RWPE1 (cell line): ENCODE measurements at regions of chr9 and their contacts with region 1.

Region 1: GRCh38 chr9:136118320-136119060 is at the start of gene TMEM250:
- DNase-seq: peak; percentile 99
- H3K27ac ChIP-seq: peak within 1 kb of the TSS; percentile 97
- CTCF ChIP-seq: peak; percentile 29

Region 2: DNA sequence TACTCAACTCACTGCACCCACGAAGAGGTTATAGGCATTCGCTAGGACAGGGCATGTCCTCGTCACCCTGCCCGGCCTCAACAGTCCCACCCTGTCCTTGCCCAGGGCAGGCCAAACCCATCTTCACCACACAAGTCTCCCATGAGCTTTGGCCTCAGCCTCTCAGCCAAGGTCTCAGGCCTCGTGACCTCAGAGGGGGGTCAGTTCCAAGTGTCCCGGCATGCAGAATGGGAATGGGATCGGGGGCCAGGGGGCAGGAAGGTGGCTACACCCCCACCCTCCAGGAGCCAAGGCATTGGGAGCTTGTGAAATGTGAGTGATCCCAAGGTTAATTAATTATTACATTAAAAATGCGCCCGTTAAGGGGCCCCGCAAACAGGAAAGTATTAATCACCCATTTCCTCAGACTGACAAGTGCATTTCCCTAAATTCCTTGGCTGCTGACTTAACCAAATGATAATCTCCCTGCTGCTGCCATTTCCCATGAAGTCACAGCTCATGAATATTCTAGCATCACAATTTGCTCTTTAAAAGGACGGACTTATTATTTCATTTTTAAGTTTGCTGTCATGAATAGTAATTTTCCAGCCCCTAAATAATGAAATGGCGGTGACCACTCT is 149.3 kb before region 1 on chr9:
- CTCF ChIA-PET with region 1: interaction called, 46 read pairs
- POLR2A ChIA-PET with region 1: no interaction called
- DNase-seq: no peak
- H3K27ac ChIP-seq: no peak overlapping the region
- CTCF ChIP-seq: no peak

Region 3: DNA sequence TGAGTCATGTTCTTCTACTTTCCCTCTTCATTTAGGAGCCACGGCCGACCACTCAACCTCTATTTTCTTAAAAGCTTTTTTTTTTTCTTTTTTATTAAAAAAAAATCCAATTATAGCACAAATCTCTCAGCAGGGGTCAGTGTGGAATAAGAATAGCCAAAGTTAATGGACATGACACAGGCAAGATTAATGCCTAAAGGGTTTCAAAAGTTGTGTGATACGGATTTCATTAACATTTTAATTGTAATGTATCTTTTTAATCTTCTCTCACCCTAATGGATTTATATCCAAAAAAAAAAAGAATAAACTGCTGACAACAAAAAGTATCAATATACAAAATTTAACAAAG is 28.8 kb before region 1 on chr9:
- CTCF ChIA-PET with region 1: interaction called, 33 read pairs
- POLR2A ChIA-PET with region 1: interaction called, 6 read pairs
- DNase-seq: peak; percentile 69
- H3K27ac ChIP-seq: peak overlapping the region; percentile 87
- CTCF ChIP-seq: peak; percentile 69